Psoas muscle (tissue), 8 donors: ENCODE measurements at regions of chr1 and their contacts with region 1.

Region 1: DNA sequence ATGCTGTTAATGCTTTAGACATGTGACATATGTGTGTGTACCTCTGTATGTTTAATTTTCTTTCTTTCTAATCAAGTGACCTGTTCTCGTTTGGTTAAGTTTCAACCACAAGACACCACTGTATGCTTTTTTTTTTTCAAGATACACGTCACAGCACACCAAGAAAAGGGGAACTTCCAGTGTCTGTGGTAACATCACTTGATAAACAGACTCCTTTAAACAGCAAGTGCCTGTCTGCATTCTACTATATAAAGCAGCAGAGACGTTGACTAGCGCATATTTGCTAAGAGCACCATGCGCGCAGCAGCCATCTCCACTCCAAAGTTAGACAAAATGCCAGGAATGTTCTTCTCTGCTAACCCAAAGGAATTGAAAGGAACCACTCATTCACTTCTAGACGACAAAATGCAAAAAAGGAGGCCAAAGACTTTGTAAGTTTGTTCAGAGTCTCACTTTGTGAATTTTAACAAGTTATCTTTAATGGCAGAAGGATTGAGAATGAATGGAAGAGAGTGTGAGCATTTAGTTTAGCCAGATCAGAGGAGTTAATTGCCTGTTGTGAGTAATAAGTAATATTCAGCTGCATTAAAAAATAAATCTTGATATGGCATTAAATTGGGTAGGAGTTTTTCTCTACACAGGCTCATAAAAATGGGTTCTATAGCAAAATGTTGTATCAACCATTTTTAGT is at the start of gene RGS1:
- DNase-seq: no peak
- ATAC-seq: peak in 1 of 4 donors; percentile 27
- H3K4me3 ChIP-seq: no peak within 1 kb of the TSS
- H3K27ac ChIP-seq: no peak within 1 kb of the TSS
- H3K4me1 ChIP-seq: no peaks in the 10 kb centered on the region
- H3K27me3 ChIP-seq: no peaks in the 10 kb centered on the region
- CTCF ChIP-seq: no peak
- total RNA-seq, gene RGS1: 0.61 to 1.7 (median 1.4) TPM

Region 2: GRCh38 chr1:191536791-191537429 is 1038.7 kb before region 1 on chr1:
- intact Hi-C with region 1: loop called in 1 of 2 experiments (anchors 10 kb)
- DNase-seq: no peak
- ATAC-seq: no peak
- H3K4me3 ChIP-seq: no peak overlapping the region
- H3K27ac ChIP-seq: no peak overlapping the region
- H3K4me1 ChIP-seq: no peaks in the 10 kb centered on the region
- H3K27me3 ChIP-seq: no peaks in the 10 kb centered on the region
- CTCF ChIP-seq: no peak

Region 3: GRCh38 chr1:192418552-192419285 is 156.9 kb before region 1 on chr1:
- intact Hi-C with region 1: no loop called
- DNase-seq: no peak
- ATAC-seq: no peak
- H3K4me3 ChIP-seq: no peak overlapping the region
- H3K27ac ChIP-seq: no peak overlapping the region
- H3K4me1 ChIP-seq: no peaks in the 10 kb centered on the region
- H3K27me3 ChIP-seq: no peaks in the 10 kb centered on the region
- CTCF ChIP-seq: no peak